MCF 10A (cell line): ENCODE measurements at regions of chr2 and their contacts with region 1.

Region 1: GRCh38 chr2:178193823-178194599 is at the start of gene OSBPL6:
- DNase-seq: peak; percentile 84
- H3K4me3 Mint-ChIP-seq: peak within 1 kb of the TSS; percentile 87
- H3K27ac Mint-ChIP-seq: no peak within 1 kb of the TSS
- H3K4me1 Mint-ChIP-seq: peaks cover 21% of the 10 kb centered on the region
- H3K27me3 Mint-ChIP-seq: no peaks in the 10 kb centered on the region
- CTCF ChIP-seq: peak; percentile 9
- total RNA-seq, gene OSBPL6: 26.2 and 43.1 TPM in 2 replicates

Region 2: GRCh38 chr2:177783835-177784744 is 409.9 kb before region 1 on chr2:
- CTCF ChIA-PET with region 1: no interaction called
- POLR2A ChIA-PET with region 1: no interaction called
- intact Hi-C with region 1: no loop called
- DNase-seq: no peak
- H3K4me3 Mint-ChIP-seq: no peak overlapping the region
- H3K27ac Mint-ChIP-seq: no peak overlapping the region
- H3K4me1 Mint-ChIP-seq: no peaks in the 10 kb centered on the region
- H3K27me3 Mint-ChIP-seq: no peaks in the 10 kb centered on the region
- CTCF ChIP-seq: no peak

Region 3: DNA sequence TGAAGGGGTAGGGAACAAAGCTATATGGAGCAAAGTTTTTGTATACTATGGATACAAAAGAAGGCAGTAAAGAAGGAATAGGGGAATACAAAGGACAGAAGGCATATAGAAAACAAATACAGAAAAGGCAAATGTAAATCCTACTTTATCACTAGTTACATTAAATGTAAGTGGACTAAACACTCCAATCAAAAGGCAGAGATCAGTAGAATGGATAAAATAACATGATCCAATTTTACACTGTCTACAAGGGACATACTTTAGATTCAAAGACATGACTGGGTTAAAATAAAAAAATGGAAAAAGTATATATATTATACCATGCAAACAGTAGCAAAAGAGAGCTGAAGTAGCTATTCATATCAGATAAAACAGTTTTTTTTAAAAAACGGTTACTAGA is 336.5 kb before region 1 on chr2:
- CTCF ChIA-PET with region 1: no interaction called
- POLR2A ChIA-PET with region 1: no interaction called
- intact Hi-C with region 1: no loop called
- DNase-seq: no peak
- H3K4me3 Mint-ChIP-seq: no peak overlapping the region
- H3K27ac Mint-ChIP-seq: no peak overlapping the region
- H3K4me1 Mint-ChIP-seq: no peaks in the 10 kb centered on the region
- H3K27me3 Mint-ChIP-seq: no peaks in the 10 kb centered on the region
- CTCF ChIP-seq: no peak

Region 4: GRCh38 chr2:177888581-177888980 is 305.4 kb before region 1 on chr2:
- CTCF ChIA-PET with region 1: no interaction called
- POLR2A ChIA-PET with region 1: no interaction called
- intact Hi-C with region 1: no loop called
- DNase-seq: peak; percentile 47
- H3K4me3 Mint-ChIP-seq: no peak overlapping the region
- H3K27ac Mint-ChIP-seq: no peak overlapping the region
- H3K4me1 Mint-ChIP-seq: no peaks in the 10 kb centered on the region
- H3K27me3 Mint-ChIP-seq: no peaks in the 10 kb centered on the region
- CTCF ChIP-seq: no peak

Region 5: DNA sequence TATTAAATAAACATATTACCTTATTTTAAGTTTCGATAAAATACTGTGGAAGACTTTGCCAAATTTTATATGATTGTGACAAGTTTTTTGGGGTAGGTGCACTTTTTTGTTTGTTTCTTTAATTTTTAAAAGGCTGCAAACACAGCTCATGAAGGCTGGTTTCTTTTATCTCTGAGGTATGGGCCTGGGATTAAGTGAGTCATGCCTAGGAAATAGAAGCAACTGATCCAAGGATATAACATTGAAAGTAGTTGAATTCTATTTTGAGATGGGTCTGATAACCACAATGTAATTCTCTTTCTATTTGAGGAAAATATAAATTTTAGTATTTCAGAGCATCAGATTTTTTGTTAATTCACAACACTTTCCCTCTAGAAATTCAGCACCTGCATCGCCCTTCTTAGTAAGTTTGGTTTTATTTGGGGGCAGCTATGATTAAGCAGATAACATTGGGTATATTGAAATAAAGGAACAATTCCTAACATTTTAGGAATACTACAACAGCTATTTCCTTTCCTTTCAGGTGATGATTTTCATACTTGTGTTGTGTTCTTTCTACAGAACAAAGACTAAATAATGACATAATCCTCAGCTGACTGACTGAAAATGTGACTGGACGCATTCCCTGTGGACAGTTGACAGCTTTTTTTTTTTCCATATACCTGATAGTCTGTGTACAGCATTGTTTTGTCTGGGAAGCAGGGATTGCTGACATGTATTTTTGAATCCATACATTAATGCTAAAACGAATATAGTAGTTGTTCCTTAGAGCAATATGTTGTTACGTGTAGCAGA is 65.0 kb before region 1 on chr2:
- CTCF ChIA-PET with region 1: interaction called, 8 read pairs
- POLR2A ChIA-PET with region 1: interaction called, 23 read pairs
- intact Hi-C with region 1: loop called (anchors 5 kb)
- DNase-seq: no peak
- H3K4me3 Mint-ChIP-seq: no peak overlapping the region
- H3K27ac Mint-ChIP-seq: no peak overlapping the region
- H3K4me1 Mint-ChIP-seq: peaks cover 8% of the 10 kb centered on the region
- H3K27me3 Mint-ChIP-seq: no peaks in the 10 kb centered on the region
- CTCF ChIP-seq: no peak

Region 6: DNA sequence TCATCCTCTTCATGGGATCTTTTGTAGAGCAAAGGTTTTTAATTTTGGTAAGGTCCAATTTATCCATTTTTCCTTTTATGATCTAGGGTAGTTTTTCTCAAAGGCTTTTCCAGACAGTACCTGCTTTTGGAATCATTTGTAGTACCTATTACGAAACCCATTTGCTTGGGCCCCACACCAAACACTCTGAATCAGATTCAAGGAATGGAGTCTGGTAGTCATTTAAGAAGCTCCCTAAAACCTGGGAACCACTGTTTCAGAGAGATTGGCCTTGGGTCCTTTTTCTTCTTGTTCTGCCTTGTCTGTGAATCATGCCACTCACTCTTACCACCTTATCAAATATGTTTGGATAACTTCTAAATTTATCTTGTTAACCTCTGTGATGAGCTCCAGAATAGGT is 40.6 kb after region 1 on chr2:
- CTCF ChIA-PET with region 1: interaction called, 5 read pairs
- POLR2A ChIA-PET with region 1: interaction called, 10 read pairs
- intact Hi-C with region 1: loop called (anchors 2 kb)
- DNase-seq: peak; percentile 77
- H3K4me3 Mint-ChIP-seq: no peak overlapping the region
- H3K27ac Mint-ChIP-seq: peak overlapping the region; percentile 57
- H3K4me1 Mint-ChIP-seq: peaks cover 57% of the 10 kb centered on the region
- H3K27me3 Mint-ChIP-seq: no peaks in the 10 kb centered on the region
- CTCF ChIP-seq: no peak

Region 7: GRCh38 chr2:178280244-178280852 is 86.3 kb after region 1 on chr2:
- CTCF ChIA-PET with region 1: interaction called, 4 read pairs
- POLR2A ChIA-PET with region 1: interaction called, 27 read pairs
- intact Hi-C with region 1: loop called (anchors 1 kb)
- DNase-seq: peak; percentile 69
- H3K4me3 Mint-ChIP-seq: no peak overlapping the region
- H3K27ac Mint-ChIP-seq: no peak overlapping the region
- H3K4me1 Mint-ChIP-seq: peaks cover 47% of the 10 kb centered on the region
- H3K27me3 Mint-ChIP-seq: no peaks in the 10 kb centered on the region
- CTCF ChIP-seq: peak; percentile 71

Region 8: DNA sequence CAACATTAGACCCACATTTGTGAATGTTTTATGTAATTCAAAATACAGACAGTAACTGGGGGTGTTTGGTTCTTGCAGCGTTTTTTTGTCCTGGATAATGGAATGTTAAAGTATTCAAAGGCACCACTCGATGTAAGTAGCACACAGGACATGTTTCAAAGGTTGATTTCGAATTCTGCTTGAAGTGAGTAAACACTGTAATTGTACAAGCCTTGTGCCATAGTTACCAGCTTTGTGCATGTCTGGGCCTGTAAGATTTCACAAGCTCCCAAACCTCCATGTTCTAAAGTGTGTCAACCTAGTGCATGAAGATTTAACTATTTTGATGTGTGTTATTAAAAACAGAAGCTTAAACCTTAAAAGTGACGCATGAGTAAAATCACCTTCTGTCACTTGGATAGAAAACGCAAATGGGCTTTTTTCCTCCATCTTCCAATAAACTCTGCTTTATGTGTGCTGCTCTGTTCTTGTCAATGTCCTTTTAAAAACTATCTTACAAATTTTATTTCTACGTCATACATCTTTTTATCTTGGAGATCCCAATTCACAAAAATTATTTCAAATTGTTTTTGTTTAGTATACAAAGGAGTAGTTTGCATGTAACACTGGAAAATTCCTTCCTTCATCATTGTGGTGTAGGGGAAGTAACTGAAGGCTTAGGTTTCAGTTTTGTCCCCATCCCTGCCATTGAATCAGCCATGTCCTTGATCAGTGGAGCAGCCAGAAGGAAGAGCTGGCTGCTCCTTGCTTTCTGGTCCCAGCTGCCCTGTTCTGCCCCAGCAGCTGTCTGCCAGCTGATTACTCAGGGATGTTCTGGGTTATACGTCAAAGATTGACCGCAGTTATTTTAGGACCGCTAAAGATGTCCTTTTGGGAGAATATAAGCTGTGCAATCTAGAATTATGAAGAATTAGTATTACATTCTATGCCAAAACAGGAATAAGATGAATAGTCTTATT is 137.7 kb after region 1 on chr2:
- CTCF ChIA-PET with region 1: interaction called, 3 read pairs
- POLR2A ChIA-PET with region 1: interaction called, 9 read pairs
- intact Hi-C with region 1: loop called (anchors 10 kb)
- DNase-seq: peak; percentile 86
- H3K4me3 Mint-ChIP-seq: peak overlapping the region; percentile 22
- H3K27ac Mint-ChIP-seq: peak overlapping the region; percentile 82
- H3K4me1 Mint-ChIP-seq: peaks cover 9% of the 10 kb centered on the region
- H3K27me3 Mint-ChIP-seq: no peaks in the 10 kb centered on the region
- CTCF ChIP-seq: no peak

Region 9: DNA sequence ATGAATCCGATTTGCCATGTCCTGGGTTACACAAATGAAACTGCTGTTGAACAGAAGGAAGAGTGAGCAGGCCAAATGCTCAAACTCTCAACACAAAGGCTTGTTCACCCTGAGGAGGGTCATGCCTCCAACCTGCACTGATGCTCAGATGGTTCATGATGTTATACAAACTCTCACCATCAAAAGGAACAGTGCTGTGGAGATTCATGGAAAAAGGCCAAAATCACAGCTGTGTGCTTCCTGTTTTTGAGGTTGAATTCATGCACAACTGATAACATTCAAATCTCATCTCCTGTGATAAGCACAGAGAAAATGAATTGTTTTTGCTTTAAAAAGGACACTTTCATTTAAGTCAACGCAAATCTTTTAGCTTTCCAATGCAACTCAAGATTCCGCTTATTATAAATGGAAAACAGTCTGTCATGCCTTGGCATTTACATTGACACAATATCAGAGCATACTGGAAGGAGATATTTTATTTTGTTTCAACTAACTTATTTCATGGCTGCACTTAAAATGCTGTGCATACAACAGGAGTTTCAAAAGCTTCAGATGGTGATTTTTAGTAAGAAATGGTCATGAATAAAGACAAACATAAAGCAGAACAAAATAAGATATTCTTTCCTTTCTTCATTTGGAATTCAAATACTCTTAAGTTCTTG is 635.4 kb after region 1 on chr2:
- CTCF ChIA-PET with region 1: no interaction called
- POLR2A ChIA-PET with region 1: no interaction called
- intact Hi-C with region 1: no loop called
- DNase-seq: no peak
- H3K4me3 Mint-ChIP-seq: no peak overlapping the region
- H3K27ac Mint-ChIP-seq: no peak overlapping the region
- H3K4me1 Mint-ChIP-seq: no peaks in the 10 kb centered on the region
- H3K27me3 Mint-ChIP-seq: no peaks in the 10 kb centered on the region
- CTCF ChIP-seq: no peak